ENCODE measurements at regions of chr1 and their contacts with region 1.

Region 1: GRCh38 chr1:17502326-17502778 is 37.1 kb upstream of the ARHGEF10L start:
- DNase-seq: peak; percentile 65
- H3K4me3 ChIP-seq: no peak overlapping the region
- H3K27ac ChIP-seq: no peak overlapping the region
- H3K27me3 ChIP-seq: peaks cover 4% of the 10 kb centered on the region
- CTCF ChIP-seq: peak; percentile 96

Region 2: DNA sequence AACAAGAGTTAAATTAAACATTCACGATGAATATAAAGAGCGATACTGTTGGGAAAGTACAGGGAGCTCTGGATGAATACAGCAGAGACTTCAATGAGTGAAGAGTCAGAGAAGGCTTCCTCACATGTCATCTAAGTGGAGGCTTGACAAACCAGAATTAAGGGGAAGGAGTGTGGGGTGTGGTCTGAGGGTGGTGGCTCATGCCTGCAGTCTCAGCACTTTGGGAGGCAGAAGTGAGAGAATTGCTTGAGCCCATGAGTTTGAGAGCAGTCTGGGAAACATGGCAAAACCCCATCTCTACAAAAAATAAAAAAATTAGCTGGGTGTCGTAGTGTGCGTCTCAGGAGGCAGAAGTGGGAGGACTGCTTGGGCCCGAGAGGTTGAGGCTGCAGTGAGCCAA is 457.2 kb before region 1 on chr1:
- CTCF ChIA-PET with region 1: no interaction called
- POLR2A ChIA-PET with region 1: no interaction called
- DNase-seq: no peak
- H3K4me3 ChIP-seq: no peak overlapping the region
- H3K27ac ChIP-seq: no peak overlapping the region
- H3K27me3 ChIP-seq: no peaks in the 10 kb centered on the region
- CTCF ChIP-seq: no peak

Region 3: DNA sequence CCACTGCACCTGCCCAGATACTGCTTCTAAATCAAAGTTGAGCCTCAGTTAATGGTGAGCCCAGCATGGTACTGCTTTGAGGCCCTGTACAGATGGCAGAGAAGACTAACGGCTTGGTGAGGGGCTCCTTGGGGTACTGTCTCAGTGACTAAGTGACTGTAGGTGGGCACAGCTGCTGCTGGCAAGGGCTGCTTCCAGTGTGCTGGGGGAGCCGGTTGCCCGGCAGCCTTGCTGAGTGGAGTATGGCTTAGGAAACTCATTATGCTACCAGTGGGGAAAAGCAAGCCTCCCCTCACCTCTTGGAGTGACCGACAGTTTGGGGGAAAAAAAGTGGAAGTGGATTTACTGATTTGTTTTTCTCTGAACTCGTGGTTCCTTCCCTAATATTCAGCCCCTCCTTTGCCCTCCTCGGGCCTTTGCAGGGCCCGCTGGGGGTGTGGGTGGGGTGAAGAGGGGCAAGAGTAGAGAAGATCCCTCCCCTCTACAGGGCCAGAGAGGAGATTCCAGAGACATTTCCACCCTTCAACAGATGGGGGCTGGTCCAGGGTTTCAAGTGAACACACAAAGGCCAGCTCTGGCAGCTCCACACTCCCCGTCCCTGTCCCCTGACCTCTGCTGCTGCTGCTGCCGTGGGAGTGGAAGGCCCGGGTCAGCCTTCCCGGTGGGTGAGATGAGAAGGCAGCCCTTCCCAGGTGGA is 13.7 kb after region 1 on chr1:
- CTCF ChIA-PET with region 1: interaction called, 26 read pairs
- POLR2A ChIA-PET with region 1: no interaction called
- DNase-seq: no peak
- H3K4me3 ChIP-seq: no peak overlapping the region
- H3K27ac ChIP-seq: no peak overlapping the region
- H3K27me3 ChIP-seq: peaks cover 37% of the 10 kb centered on the region
- CTCF ChIP-seq: no peak

Region 4: DNA sequence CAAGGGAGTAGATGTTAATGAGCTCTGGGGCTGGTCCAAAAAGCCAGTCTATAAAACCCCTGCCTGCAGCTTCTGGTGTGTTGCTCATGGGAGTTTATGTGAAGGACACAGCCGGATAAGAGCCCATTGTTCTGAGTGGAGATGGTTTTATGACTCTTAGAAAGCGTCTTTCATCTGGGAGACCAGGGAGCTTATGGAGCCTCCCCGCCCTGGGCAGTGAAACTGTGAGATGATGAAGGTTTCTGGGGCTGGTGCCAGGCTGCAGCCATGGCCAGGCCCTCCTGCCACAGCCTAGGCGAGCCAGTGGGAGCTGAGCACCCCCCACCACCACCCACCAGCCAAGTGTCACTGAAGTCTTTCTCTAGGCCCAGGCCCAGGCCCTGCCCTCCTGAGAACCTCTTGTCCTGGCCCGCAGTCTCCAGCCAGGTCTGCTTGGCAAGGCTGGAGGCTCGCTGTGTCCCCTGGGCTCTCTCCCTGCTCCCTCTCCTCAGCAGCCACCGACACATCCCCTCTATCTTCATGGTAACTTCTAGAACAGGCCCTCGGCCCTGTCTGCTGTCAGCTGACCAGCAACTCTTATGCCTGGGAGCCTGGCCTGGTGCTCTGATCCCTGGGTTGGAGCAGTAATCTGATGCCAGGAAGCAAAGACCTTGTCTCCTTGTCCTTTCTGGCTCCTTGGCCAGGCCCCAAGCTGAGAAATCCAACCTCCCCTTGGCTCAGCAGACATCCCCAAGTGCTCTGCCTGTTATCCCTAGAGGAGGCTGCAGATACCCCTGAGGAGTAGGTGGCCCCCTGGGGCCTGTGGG is 29.5 kb after region 1 on chr1:
- CTCF ChIA-PET with region 1: interaction called, 17 read pairs
- POLR2A ChIA-PET with region 1: no interaction called
- DNase-seq: no peak
- H3K4me3 ChIP-seq: no peak overlapping the region
- H3K27ac ChIP-seq: peak overlapping the region; percentile 31
- H3K27me3 ChIP-seq: peaks cover 5% of the 10 kb centered on the region
- CTCF ChIP-seq: no peak

Region 5: GRCh38 chr1:17596651-17597509 is 94.5 kb after region 1 on chr1:
- CTCF ChIA-PET with region 1: interaction called, 23 read pairs
- POLR2A ChIA-PET with region 1: no interaction called
- DNase-seq: no peak
- H3K4me3 ChIP-seq: no peak overlapping the region
- H3K27ac ChIP-seq: no peak overlapping the region
- H3K27me3 ChIP-seq: no peaks in the 10 kb centered on the region
- CTCF ChIP-seq: no peak

Region 6: DNA sequence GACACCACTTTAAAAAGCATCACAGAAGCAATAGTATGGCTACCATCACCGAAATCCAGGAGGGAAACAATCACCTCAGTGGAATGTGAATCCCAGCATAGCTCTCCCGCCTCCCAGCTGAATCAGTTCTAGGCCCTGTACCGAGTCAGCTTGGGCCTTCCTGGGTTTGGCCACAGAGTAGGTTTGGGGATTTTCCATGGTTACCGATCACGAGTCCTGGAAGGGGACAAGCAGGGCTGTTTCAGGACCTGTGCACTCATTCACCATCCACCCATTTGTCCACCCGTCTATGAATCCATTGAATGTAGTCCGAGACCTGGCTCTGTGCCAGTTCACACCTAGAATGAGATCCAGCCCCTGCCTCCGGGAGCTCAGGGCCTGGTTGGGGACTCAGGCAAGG is 131.3 kb after region 1 on chr1:
- CTCF ChIA-PET with region 1: interaction called, 14 read pairs
- POLR2A ChIA-PET with region 1: no interaction called
- DNase-seq: peak; percentile 32
- H3K4me3 ChIP-seq: no peak overlapping the region
- H3K27ac ChIP-seq: peak overlapping the region; percentile 39
- H3K27me3 ChIP-seq: no peaks in the 10 kb centered on the region
- CTCF ChIP-seq: no peak

Measured in AG04450 (cell line).